HepG2 (cell line): ENCODE measurements at regions of chr9 and their contacts with region 1.

Region 1: DNA sequence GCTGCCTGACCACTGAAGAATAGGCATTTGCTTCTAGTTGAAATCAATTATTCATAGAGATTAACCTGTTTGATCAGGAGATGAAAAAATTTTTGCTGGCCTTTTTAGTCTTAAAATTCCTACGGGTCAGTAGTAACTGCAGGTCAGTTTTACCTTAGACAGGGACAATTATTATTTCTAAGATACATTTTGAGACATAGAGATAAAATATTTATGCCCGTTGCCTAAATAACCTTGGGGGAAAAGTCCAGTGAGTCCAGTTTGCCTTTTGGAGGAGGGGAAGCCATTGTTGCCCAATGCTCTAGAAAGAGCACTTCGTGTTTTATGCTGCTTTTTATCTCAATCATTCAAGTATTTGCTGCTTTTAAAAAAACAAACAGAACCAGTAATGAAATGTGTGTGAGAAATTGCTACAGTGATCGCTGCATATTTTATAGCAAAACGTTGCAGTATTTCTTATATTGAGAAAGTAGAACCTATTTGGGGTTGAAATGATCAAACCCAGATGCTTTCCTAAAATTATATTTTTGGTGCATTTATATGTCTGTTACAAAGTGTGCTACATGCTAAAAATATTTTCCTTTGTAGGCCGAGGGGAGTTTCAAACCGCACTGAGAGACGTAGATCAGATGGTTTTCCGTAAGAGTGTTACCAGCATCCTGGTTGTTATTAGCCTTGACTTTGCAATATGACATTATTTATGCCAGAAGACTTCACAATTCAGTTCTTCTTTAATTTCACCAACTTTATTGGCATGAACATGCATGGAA is 266.8 kb downstream of the AOPEP start:
- DNase-seq: peak; percentile 62
- ATAC-seq: no peak
- H3K4me3 ChIP-seq: peak overlapping the region; percentile 54 to 66 (median 64)
- H3K27ac ChIP-seq: peak overlapping the region; percentile 95
- H3K4me1 ChIP-seq: peaks cover 89% of the 10 kb centered on the region
- H3K27me3 ChIP-seq: no peaks in the 10 kb centered on the region
- CTCF ChIP-seq: no peak
- EP300 ChIP-seq: peak; percentile 58 to 83; a peak in 3 of 4 replicates
- POLR2A ChIP-seq: no peak
- RAD21 ChIP-seq: no peak

Region 2: DNA sequence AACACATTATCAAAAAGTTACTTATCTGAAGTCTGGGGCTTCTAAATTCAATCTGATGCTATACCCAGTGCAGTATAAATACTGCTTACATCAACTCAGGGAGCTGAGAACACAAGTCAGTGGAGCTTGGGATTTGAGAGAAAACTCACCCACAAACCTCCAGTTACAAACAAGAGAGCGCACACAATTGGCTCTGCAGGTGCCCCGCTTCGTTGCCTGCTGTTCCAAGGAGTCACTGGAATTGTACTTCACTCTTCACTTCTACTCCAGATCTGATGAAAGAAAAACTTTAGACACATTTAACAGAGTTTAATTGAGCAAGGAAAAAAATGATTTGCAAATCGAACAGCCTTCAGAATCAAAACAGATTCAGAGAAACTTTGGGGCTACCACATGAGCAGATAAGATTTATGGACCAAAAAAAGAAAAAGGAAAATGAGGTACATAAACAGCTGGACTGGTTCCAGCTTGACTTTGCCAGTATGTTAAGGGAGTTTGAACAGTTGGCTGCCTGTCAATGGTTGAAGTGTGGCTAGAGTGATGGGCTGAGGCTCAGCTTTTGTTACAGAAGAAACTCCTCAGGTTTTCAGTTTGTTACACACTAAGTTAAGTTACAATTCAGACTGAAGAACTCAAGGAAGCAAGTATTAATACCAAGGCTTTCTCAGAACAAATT is 110.1 kb before region 1 on chr9:
- CTCF ChIA-PET with region 1: no interaction called
- POLR2A ChIA-PET with region 1: no interaction called
- in situ Hi-C with region 1: no loop called
- intact Hi-C with region 1: no loop called
- DNase-seq: no peak
- ATAC-seq: no peak
- H3K4me3 ChIP-seq: no peak overlapping the region
- H3K27ac ChIP-seq: no peak overlapping the region
- H3K4me1 ChIP-seq: peaks cover 27% of the 10 kb centered on the region
- H3K27me3 ChIP-seq: no peaks in the 10 kb centered on the region
- CTCF ChIP-seq: no peak
- EP300 ChIP-seq: no peak
- POLR2A ChIP-seq: no peak
- RAD21 ChIP-seq: no peak

Region 3: DNA sequence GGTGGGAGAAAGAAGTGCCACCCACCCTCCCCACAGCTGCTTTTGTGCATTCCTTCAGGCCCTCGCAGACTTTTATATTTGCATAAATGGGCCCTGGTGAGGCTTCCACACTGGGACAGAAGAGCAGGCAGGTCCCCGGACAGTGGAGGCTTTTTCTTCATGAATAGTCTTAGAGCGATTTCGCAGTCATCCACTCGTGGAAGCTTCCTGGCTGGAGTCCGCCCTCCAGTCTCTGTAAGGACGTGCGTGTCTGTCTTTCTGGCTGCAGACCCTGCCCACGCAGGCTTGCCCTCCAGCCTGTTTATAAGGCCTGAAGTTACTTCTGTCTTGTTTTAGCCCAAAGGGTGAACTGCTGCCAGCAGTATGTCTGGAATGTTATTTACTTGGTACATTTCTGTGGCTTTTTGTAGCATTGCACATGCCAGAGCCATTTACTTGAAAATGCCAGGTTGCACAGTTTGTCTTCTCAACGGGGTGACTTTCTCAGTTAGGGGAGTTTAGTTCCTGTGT is 71.1 kb before region 1 on chr9:
- CTCF ChIA-PET with region 1: no interaction called
- POLR2A ChIA-PET with region 1: interaction called, 8 read pairs
- in situ Hi-C with region 1: no loop called
- intact Hi-C with region 1: loop called (anchors 5 kb)
- DNase-seq: peak; percentile 91
- ATAC-seq: peak; percentile 89
- H3K4me3 ChIP-seq: peak overlapping the region in 1 of 3 experiments; percentile 45; a peak in 2 of 6 replicates
- H3K27ac ChIP-seq: peak overlapping the region; percentile 84
- H3K4me1 ChIP-seq: peaks cover 91% of the 10 kb centered on the region
- H3K27me3 ChIP-seq: no peaks in the 10 kb centered on the region
- CTCF ChIP-seq: no peak
- EP300 ChIP-seq: peak in 1 of 2 experiments; percentile 79; a peak in 3 of 4 replicates
- POLR2A ChIP-seq: peak in 1 of 2 experiments; percentile 40; a peak in 1 of 4 replicates
- RAD21 ChIP-seq: no peak

Region 4: DNA sequence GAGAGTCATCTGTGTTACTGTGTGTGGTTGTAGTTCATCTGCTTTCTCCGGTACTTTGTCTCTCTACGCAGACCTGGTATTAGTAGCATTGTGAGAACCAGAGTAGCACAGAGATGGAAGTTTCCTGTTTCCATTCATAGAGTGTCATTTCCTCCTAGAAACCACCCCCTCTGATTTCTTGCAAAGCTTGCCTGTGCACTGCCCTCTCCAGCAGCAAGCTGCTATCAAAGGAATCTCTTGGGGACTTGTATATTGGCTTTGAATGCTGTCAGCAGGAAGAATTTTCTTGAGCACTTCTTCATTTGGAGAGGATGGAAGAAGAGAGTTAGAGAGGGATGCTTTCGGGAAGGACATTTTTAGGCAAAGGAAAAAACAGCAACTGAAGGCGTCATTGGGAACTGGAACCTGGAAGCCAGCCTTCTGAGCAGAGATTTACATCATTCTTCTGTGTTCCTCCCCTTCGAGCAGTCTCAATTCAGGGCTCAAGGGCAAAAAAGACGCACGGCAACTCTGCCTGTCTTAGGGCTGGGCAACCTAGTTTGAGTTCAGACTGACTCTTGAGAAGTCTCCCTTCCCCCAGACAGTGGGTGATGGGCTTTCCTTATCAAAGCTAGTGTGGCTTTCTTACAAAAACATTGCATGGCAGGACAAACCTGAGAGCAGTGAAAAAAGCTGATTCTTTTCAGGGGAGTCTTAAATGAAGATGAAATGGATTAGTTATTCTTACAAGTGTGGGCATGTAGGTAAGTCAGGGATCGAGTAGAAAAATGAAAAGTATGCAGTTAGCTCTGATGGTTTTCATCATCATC is 40.5 kb before region 1 on chr9:
- CTCF ChIA-PET with region 1: no interaction called
- POLR2A ChIA-PET with region 1: interaction called, 12 read pairs
- in situ Hi-C with region 1: no loop called
- intact Hi-C with region 1: no loop called
- DNase-seq: no peak
- ATAC-seq: no peak
- H3K4me3 ChIP-seq: no peak overlapping the region
- H3K27ac ChIP-seq: no peak overlapping the region
- H3K4me1 ChIP-seq: peaks cover 28% of the 10 kb centered on the region
- H3K27me3 ChIP-seq: no peaks in the 10 kb centered on the region
- CTCF ChIP-seq: no peak
- EP300 ChIP-seq: no peak
- POLR2A ChIP-seq: no peak
- RAD21 ChIP-seq: no peak

Region 5: GRCh38 chr9:94973451-94973941 is 19.8 kb before region 1 on chr9:
- CTCF ChIA-PET with region 1: no interaction called
- POLR2A ChIA-PET with region 1: interaction called, 22 read pairs
- in situ Hi-C with region 1: no loop called
- intact Hi-C with region 1: loop called (anchors 1 kb)
- DNase-seq: no peak
- ATAC-seq: no peak
- H3K4me3 ChIP-seq: no peak overlapping the region
- H3K27ac ChIP-seq: no peak overlapping the region
- H3K4me1 ChIP-seq: peaks cover 81% of the 10 kb centered on the region
- H3K27me3 ChIP-seq: no peaks in the 10 kb centered on the region
- CTCF ChIP-seq: no peak
- EP300 ChIP-seq: no peak
- POLR2A ChIP-seq: no peak
- RAD21 ChIP-seq: no peak

Region 6: DNA sequence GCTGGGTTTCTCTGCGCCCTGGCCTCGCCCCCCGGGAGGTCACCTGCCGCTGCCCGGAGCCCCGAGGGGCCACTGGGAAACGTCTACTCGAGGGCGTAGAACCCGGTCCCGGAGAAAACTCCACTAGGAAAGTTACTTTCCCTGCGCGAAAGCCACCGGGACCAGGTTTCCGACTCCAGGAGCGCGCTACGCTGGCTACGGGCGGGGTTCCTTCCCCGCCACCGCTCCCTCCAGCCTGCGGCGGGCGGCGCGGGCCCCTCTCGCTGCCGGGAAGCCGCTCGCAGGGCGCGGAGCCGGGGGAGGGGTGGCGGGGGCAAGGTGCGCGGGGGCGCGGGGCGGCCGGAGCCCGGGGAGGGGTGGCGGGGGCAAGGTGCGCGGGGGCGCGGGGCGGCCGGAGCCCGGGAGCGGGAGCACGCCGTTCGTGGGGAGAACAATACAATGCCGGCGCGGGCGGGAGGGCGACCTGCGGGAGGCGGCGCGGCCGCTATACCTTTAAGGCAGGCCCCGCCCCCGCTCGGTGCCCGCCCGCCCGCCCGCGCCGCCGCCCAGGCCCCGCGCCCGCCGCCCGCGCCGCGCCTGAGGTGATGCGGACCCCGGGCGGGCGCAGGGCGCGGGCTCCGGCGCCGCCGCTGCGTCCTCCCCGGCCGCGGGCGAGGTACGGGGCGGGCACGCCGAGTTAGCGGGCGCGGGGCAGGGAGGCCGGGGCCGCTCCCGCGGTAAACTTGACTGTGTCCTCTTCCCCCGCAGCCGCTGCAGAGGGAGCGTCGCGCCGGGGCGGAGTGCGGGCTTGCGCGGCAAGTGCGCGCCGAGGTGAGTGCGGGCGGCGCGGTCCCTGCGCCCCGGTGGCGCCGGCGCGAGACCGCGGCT is 11.4 kb after region 1 on chr9:
- CTCF ChIA-PET with region 1: no interaction called
- POLR2A ChIA-PET with region 1: interaction called, 39 read pairs
- in situ Hi-C with region 1: no loop called
- intact Hi-C with region 1: loop called (anchors 1 kb)
- DNase-seq: peak; percentile 48
- ATAC-seq: peak; percentile 79
- H3K4me3 ChIP-seq: peak overlapping the region; percentile 78 to 92 (median 86)
- H3K27ac ChIP-seq: peak overlapping the region; percentile 99
- H3K4me1 ChIP-seq: peaks cover 50% of the 10 kb centered on the region
- H3K27me3 ChIP-seq: no peaks in the 10 kb centered on the region; a peak in 1 of 5 replicates
- CTCF ChIP-seq: no peak
- EP300 ChIP-seq: peak in 1 of 2 experiments; percentile 38; a peak in 1 of 4 replicates
- POLR2A ChIP-seq: peak; percentile 56 to 63
- RAD21 ChIP-seq: peak; percentile 56

Region 7: DNA sequence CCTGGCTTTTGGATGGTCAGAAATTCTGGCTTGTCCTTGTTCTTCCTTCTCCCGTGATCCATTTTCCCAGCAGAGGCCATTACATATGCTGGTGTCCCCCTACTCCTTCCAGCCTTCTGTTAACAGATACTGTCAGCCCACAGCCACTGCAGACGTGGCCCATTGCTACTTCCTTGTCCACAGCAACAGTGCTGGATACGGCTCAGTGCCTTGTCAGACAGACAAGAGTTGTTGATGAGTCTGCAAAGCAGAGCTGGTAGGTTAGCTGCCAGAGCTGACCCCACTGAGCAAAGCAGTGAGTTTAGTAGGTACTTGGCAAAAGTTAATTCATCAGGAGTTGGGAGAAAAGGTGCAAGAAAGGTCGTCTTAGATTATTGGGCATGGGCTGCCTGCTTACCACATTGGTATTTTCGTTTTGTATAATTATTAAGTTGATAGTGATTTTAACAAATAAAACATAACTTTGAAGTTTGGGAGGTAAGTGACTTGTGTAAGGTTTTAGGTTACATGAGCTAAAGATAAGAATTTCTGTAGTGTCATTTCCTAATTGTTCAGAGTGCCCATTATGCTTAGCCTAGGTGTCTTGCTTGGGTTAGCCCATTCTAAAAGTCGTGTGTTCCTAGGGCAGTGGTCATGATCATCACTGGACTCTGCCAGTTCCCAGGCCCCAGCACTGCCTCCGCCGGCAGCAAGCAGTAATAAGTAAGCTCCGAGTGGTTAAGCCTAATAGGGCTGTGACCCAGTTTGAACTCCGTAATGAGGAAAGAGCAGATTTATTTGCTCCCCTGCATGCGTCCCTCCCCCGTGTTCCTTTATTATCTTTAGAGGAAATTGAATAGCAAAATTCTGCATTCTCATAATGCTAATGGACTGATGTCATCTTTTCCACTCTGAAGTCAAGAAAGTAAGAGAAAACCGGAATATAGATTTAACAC is 32.2 kb after region 1 on chr9:
- CTCF ChIA-PET with region 1: no interaction called
- POLR2A ChIA-PET with region 1: interaction called, 60 read pairs
- in situ Hi-C with region 1: no loop called
- intact Hi-C with region 1: no loop called
- DNase-seq: peak; percentile 80
- ATAC-seq: peak; percentile 46
- H3K4me3 ChIP-seq: 0 out of 6 replicates have a peak overlapping the region, but pooled peaks of 1 of the 3 experiments have one; percentile 47
- H3K27ac ChIP-seq: peak overlapping the region; percentile 94
- H3K4me1 ChIP-seq: peaks cover 100% of the 10 kb centered on the region
- H3K27me3 ChIP-seq: no peaks in the 10 kb centered on the region
- CTCF ChIP-seq: peak; percentile 44
- EP300 ChIP-seq: peak; percentile 28 to 35; a peak in 1 of 4 replicates
- POLR2A ChIP-seq: 0 out of 4 replicates have a peak, but pooled peaks of 1 of the 2 experiments have one; percentile 13
- RAD21 ChIP-seq: 0 out of 2 replicates have a peak, but pooled peaks have one; percentile 40

Region 8: DNA sequence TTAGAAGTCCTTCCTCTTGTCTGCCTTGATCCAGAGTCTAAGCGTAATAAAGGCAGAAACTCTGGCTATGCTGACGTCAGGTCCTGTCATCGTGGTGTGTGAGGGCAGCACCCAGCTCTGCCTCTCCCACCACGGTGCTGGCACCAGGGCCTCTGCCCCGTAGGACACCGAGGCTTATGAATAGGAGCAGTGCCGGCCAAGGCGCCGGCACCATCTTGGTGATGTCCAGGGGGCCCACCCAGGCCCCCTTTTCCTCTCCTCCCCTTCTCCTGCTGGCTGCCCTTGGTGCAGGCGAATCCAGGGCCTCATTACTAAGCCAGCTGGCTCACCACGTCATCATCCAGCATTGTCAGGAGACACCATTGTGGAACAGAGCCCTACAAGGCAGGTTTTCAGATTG is 72.0 kb after region 1 on chr9:
- CTCF ChIA-PET with region 1: no interaction called
- POLR2A ChIA-PET with region 1: interaction called, 13 read pairs
- in situ Hi-C with region 1: no loop called
- intact Hi-C with region 1: no loop called
- DNase-seq: no peak
- ATAC-seq: no peak
- H3K4me3 ChIP-seq: no peak overlapping the region
- H3K27ac ChIP-seq: peak overlapping the region; percentile 91
- H3K4me1 ChIP-seq: peaks cover 93% of the 10 kb centered on the region
- H3K27me3 ChIP-seq: no peaks in the 10 kb centered on the region
- CTCF ChIP-seq: no peak
- EP300 ChIP-seq: no peak
- POLR2A ChIP-seq: no peak
- RAD21 ChIP-seq: no peak

Region 9: DNA sequence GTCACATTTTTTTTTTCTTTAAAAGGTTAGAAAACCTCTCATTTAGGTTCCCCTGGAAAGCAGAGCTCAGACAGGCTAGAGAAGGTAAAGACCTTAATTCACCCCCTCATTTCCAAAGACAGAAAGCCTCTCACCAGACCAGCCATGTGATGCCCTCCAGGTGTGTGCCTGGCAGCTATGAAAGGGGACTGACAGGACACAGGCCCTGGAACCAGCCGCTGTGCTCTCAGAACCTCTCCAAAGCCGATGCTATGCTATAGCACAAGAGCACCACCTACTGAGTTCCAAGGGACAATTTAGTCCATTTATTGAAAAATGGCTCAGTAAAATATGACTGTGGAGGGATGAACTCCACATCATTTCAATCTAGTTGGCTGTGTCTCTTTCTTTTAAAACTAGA is 275.4 kb after region 1 on chr9:
- CTCF ChIA-PET with region 1: no interaction called
- POLR2A ChIA-PET with region 1: no interaction called
- in situ Hi-C with region 1: no loop called
- intact Hi-C with region 1: no loop called
- DNase-seq: peak; percentile 69
- ATAC-seq: peak; percentile 74
- H3K4me3 ChIP-seq: no peak overlapping the region
- H3K27ac ChIP-seq: peak overlapping the region; percentile 94
- H3K4me1 ChIP-seq: peaks cover 44% of the 10 kb centered on the region
- H3K27me3 ChIP-seq: no peaks in the 10 kb centered on the region
- CTCF ChIP-seq: peak; percentile 84
- EP300 ChIP-seq: no peak
- POLR2A ChIP-seq: no peak
- RAD21 ChIP-seq: peak; percentile 65